Left ventricle myocardium inferior (tissue), 1 donor: ENCODE measurements at regions of chr3 and their contacts with region 1.

Region 1: GRCh38 chr3:158167737-158168471 is 58.0 kb downstream of the RSRC1 start:
- DNase-seq: no peak
- H3K4me3 ChIP-seq: no peak overlapping the region
- H3K27ac ChIP-seq: no peak overlapping the region
- H3K4me1 ChIP-seq: peaks cover 4% of the 10 kb centered on the region
- H3K27me3 ChIP-seq: no peaks in the 10 kb centered on the region
- CTCF ChIP-seq: no peak

Region 2: GRCh38 chr3:157239082-157239704 is 928.7 kb before region 1 on chr3:
- intact Hi-C with region 1: loop called (anchors 5 kb)
- DNase-seq: peak; percentile 43
- H3K4me3 ChIP-seq: no peak overlapping the region
- H3K27ac ChIP-seq: no peak overlapping the region
- H3K4me1 ChIP-seq: peaks cover 6% of the 10 kb centered on the region
- H3K27me3 ChIP-seq: no peaks in the 10 kb centered on the region
- CTCF ChIP-seq: peak; percentile 84